WTC11 (cell line): ENCODE measurements at regions of chr1 and their contacts with region 1.

Region 1: GRCh38 chr1:35882945-35883634 is at the start of gene AGO1:
- DNase-seq: peak; percentile 97
- ATAC-seq: peak; percentile 51
- H3K4me3 Mint-ChIP-seq: peak within 1 kb of the TSS; percentile 96
- H3K27ac Mint-ChIP-seq: peak within 1 kb of the TSS; percentile 94
- H3K4me1 Mint-ChIP-seq: peaks cover 45% of the 10 kb centered on the region
- H3K27me3 Mint-ChIP-seq: no peaks in the 10 kb centered on the region
- CTCF ChIP-seq: peak; percentile 91
- total RNA-seq, gene AGO1: 77.8 to 81.8 TPM (median 80.6 TPM) in 3 replicates

Region 2: DNA sequence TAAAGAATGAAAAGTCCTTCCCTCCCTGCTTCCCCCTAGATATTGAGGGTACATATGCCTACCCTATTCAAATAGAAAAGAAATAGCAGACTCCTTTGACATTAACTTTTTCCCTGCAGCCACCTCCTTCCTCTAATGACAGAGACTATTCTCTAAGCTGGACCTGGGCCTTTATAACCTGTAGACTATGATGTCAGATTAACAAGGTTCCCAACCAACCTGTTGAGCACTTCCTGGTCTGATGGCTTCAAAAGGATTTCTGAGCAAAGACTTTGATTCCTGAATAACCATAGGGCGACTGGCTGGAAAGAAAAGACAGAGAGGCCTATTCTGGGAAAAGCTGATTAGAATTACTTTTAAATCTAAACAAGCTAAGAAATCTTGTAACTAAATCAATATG is 146.0 kb before region 1 on chr1:
- CTCF ChIA-PET with region 1: no interaction called
- POLR2A ChIA-PET with region 1: no interaction called
- DNase-seq: no peak
- ATAC-seq: no peak
- H3K4me3 Mint-ChIP-seq: no peak overlapping the region
- H3K27ac Mint-ChIP-seq: no peak overlapping the region
- H3K4me1 Mint-ChIP-seq: no peaks in the 10 kb centered on the region
- H3K27me3 Mint-ChIP-seq: no peaks in the 10 kb centered on the region
- CTCF ChIP-seq: no peak

Region 3: GRCh38 chr1:35769188-35769758 is 113.8 kb before region 1 on chr1:
- CTCF ChIA-PET with region 1: interaction called, 13 read pairs
- POLR2A ChIA-PET with region 1: interaction called, 7 read pairs
- DNase-seq: peak; percentile 92
- ATAC-seq: peak; percentile 75
- H3K4me3 Mint-ChIP-seq: peak overlapping the region; percentile 99
- H3K27ac Mint-ChIP-seq: peak overlapping the region; percentile 79
- H3K4me1 Mint-ChIP-seq: peaks cover 3% of the 10 kb centered on the region; the same call in 1 of the 2 replicates
- H3K27me3 Mint-ChIP-seq: no peaks in the 10 kb centered on the region; the same call in 1 of the 2 replicates
- CTCF ChIP-seq: no peak

Region 4: GRCh38 chr1:35854989-35855700 is 27.9 kb before region 1 on chr1:
- CTCF ChIA-PET with region 1: interaction called, 16 read pairs
- POLR2A ChIA-PET with region 1: interaction called, 4 read pairs
- DNase-seq: peak; percentile 30
- ATAC-seq: peak; percentile 61
- H3K4me3 Mint-ChIP-seq: no peak overlapping the region
- H3K27ac Mint-ChIP-seq: peak overlapping the region; percentile 89
- H3K4me1 Mint-ChIP-seq: peaks cover 23% of the 10 kb centered on the region
- H3K27me3 Mint-ChIP-seq: no peaks in the 10 kb centered on the region
- CTCF ChIP-seq: no peak

Region 5: DNA sequence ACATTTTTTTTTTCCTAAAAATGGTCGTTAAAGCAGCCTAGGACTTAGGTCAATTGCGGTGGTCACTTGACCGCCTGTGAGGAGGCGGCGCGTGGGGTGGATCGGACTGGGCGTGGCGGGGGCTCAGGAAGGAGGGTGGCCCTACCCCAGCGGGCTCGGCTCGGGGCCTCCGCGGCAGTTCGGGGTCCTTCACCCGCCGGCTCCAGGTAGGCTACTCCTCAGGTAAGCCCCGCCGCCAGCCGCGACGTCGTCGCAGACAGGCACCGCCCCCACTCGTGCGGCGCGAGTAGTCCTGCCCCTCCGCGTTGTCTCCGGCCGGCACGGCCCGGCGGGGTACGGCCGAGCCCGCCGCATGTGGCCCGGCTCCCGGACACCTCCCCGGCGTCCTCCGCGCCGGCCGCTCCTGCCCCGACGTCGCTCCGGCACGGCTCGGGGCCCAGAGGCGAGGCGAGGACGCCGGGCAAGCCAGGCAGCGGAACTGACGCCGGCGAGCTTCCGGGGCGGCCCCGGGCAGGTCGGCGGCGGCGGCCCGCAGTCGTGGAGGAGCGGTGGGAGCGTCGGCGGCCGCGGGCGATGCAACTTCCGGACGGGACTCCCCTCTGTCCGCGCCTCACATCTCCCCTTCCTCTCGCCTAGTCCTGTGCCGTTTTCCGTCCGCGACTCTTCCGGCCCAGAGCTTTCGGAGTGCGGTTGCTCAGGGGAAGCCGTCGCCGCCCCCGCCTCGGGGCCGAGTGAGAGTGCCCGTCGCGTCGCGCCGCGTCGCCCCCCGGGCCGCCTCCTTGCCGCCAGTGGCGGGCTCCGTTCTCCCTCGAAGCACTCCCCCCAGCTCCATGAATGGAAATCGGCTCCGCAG is 47.7 kb after region 1 on chr1 and contains the start of gene AGO3:
- CTCF ChIA-PET with region 1: interaction called, 10 read pairs
- POLR2A ChIA-PET with region 1: interaction called, 12 read pairs
- DNase-seq: peak; percentile 85
- ATAC-seq: peak; percentile 84
- H3K4me3 Mint-ChIP-seq: peak within 1 kb of the TSS; percentile 91
- H3K27ac Mint-ChIP-seq: peak within 1 kb of the TSS; percentile 98
- H3K4me1 Mint-ChIP-seq: peaks cover 45% of the 10 kb centered on the region
- H3K27me3 Mint-ChIP-seq: no peaks in the 10 kb centered on the region
- CTCF ChIP-seq: no peak
- total RNA-seq, gene AGO3: 26.8 to 30.7 TPM (median 27.0 TPM) in 3 replicates